ENCODE measurements at regions of chrX and their contacts with region 1.

Region 1: GRCh38 chrX:51420610-51421009 is 75.8 kb downstream of the NUDT11 start:
- DNase-seq: peak; percentile 40
- H3K4me3 ChIP-seq: no peak overlapping the region
- H3K27ac ChIP-seq: no peak overlapping the region
- H3K4me1 ChIP-seq: peaks cover 0 to 3% of the 10 kb centered on the region in 2 experiments; a peak in 1 of 4 replicates
- H3K27me3 ChIP-seq: no peaks in the 10 kb centered on the region; the same call in 1 of the 2 replicates
- CTCF ChIP-seq: peak; percentile 87
- EP300 ChIP-seq: no peak
- RAD21 ChIP-seq: peak; percentile 64

Region 2: DNA sequence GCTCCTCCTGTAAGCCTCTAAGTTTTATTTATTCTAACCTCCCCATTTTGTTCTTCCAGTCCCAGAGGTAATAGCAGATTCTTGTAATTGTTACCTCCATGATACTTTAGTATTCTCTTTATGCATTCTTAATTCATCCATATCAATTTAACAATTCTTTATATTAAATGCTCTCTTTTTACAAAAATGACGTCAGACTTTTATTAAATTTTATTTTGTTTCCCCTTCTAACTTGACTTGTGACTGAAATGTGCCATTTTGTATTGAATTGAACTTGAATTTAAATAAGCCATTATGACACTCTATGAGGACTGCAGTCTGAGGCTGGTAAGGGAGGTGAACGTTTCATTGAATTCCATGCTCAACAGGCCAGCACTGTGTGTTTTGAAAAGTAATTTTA is 148.0 kb before region 1 on chrX:
- CTCF ChIA-PET with region 1: no interaction called
- POLR2A ChIA-PET with region 1: no interaction called
- DNase-seq: no peak
- H3K4me3 ChIP-seq: no peak overlapping the region
- H3K27ac ChIP-seq: no peak overlapping the region
- H3K4me1 ChIP-seq: no peaks in the 10 kb centered on the region
- H3K27me3 ChIP-seq: no peaks in the 10 kb centered on the region
- CTCF ChIP-seq: no peak
- EP300 ChIP-seq: no peak
- RAD21 ChIP-seq: no peak

Region 3: DNA sequence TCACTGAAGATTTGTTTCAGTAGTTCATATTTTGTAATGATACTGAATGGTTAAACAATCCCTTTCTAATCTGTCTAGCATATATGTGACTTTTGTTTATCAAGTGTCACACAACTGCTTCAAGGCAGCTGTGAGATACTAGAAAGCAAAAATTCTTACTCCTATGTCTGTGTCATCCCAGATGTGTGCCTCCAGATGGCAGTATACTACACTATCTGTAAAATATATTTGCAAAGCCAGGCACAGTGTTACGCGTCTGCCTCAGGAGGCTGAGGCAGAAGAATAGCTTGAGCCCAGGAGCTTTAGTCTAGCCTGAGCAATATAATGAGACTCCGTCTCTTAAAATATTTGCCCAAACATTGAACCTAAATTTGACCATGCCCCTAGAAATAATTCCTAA is 84.0 kb before region 1 on chrX:
- CTCF ChIA-PET with region 1: interaction called, 106 read pairs
- POLR2A ChIA-PET with region 1: no interaction called
- DNase-seq: peak; percentile 63
- H3K4me3 ChIP-seq: no peak overlapping the region
- H3K27ac ChIP-seq: no peak overlapping the region
- H3K4me1 ChIP-seq: no peaks in the 10 kb centered on the region; a peak in 1 of 4 replicates
- H3K27me3 ChIP-seq: peaks cover 14% of the 10 kb centered on the region
- CTCF ChIP-seq: peak; percentile 67
- EP300 ChIP-seq: no peak
- RAD21 ChIP-seq: peak; percentile 74

Region 4: GRCh38 chrX:51395810-51396728 is 24.5 kb before region 1 on chrX:
- CTCF ChIA-PET with region 1: interaction called, 22 read pairs
- POLR2A ChIA-PET with region 1: no interaction called
- DNase-seq: peak; percentile 73
- H3K4me3 ChIP-seq: peak overlapping the region; percentile 37 to 46; a peak in 3 of 4 replicates
- H3K27ac ChIP-seq: peak overlapping the region in 1 of 2 experiments; percentile 67; a peak in 1 of 4 replicates
- H3K4me1 ChIP-seq: no peaks in the 10 kb centered on the region; a peak in 1 of 4 replicates
- H3K27me3 ChIP-seq: no peaks in the 10 kb centered on the region
- CTCF ChIP-seq: peak; percentile 25; the same call in 1 of the 2 replicates
- EP300 ChIP-seq: no peak
- RAD21 ChIP-seq: no peak

Region 5: DNA sequence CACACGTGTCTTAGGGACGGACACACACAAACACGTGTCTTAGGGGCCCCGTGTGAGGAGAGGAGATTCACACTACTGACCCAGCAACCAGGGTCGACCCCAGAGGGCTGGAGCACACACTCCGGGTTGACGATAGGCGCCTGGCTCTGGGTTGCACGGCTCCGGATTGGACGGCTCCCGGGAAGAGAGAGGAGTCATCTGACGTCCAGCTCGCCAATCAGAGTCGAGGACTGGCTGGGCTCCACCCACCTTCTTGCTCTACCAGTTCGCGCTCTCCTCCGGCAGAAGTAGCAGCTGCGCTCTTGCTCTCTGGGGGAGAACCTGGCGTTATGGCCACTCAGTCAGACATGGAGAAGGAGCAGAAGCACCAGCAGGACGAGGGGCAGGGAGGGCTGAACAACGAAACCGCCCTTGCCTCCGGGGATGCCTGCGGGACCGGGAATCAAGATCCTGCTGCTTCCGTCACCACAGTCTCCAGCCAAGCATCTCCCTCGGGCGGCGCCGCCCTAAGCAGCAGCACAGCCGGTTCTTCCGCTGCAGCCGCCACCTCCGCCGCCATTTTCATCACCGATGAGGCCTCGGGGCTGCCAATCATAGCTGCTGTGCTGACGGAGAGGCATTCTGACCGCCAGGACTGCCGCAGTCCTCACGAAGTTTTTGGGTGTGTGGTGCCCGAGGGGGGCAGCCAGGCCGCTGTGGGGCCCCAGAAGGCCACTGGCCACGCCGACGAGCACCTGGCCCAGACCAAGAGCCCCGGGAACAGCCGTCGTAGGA is 13.7 kb before region 1 on chrX:
- CTCF ChIA-PET with region 1: interaction called, 27 read pairs
- POLR2A ChIA-PET with region 1: no interaction called
- DNase-seq: no peak
- H3K4me3 ChIP-seq: no peak overlapping the region
- H3K27ac ChIP-seq: no peak overlapping the region
- H3K4me1 ChIP-seq: no peaks in the 10 kb centered on the region
- H3K27me3 ChIP-seq: peaks cover 10% of the 10 kb centered on the region; the same call in 1 of the 2 replicates
- CTCF ChIP-seq: no peak
- EP300 ChIP-seq: no peak
- RAD21 ChIP-seq: no peak

Region 6: DNA sequence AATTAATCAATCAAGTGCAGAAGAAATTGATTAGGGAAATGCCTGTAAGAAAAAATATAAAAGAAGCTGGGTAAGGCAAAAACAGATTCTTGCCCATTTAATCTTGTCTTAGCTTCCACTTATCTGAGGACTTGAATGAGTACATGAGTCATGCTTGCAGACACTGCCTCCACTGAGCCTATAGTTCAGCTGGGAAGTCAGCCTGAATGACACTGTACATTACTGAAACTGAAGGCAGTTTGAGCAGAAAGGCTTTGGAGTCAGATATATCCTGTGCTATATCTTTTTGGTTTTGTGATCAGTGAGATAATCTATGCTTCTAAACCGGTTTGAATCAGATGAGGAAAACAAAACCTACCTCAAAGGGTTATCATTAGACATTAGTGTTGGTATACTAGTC is 14.5 kb after region 1 on chrX:
- CTCF ChIA-PET with region 1: interaction called, 10 read pairs
- POLR2A ChIA-PET with region 1: no interaction called
- DNase-seq: no peak
- H3K4me3 ChIP-seq: no peak overlapping the region
- H3K27ac ChIP-seq: no peak overlapping the region
- H3K4me1 ChIP-seq: no peaks in the 10 kb centered on the region
- H3K27me3 ChIP-seq: no peaks in the 10 kb centered on the region
- CTCF ChIP-seq: no peak
- EP300 ChIP-seq: no peak
- RAD21 ChIP-seq: no peak

Region 7: GRCh38 chrX:51440365-51440764 is 19.8 kb after region 1 on chrX:
- CTCF ChIA-PET with region 1: interaction called, 15 read pairs
- POLR2A ChIA-PET with region 1: no interaction called
- DNase-seq: no peak
- H3K4me3 ChIP-seq: no peak overlapping the region
- H3K27ac ChIP-seq: no peak overlapping the region
- H3K4me1 ChIP-seq: no peaks in the 10 kb centered on the region
- H3K27me3 ChIP-seq: no peaks in the 10 kb centered on the region
- CTCF ChIP-seq: no peak
- EP300 ChIP-seq: no peak
- RAD21 ChIP-seq: no peak

Region 8: DNA sequence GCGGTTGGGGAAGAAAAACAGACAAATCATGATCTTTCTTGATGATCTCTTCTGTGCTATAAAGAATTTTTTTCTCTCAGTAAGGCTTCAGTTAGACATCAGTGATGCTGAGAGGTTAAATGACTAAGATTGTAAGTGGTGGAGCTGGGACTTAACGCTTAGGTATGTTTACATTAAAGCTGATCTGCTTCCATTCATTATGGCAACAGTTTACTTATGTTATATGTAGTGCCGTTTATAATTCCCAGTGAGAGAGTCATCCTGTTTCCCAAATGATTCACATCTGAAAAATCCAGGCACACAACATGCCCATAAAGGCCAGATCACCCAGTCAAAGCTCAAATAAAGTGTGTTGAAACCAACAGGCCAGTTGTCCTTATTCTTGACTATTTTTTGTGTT is 148.0 kb after region 1 on chrX:
- CTCF ChIA-PET with region 1: no interaction called
- POLR2A ChIA-PET with region 1: no interaction called
- DNase-seq: no peak
- H3K4me3 ChIP-seq: no peak overlapping the region
- H3K27ac ChIP-seq: peak overlapping the region in 1 of 2 experiments; percentile 57; a peak in 2 of 4 replicates
- H3K4me1 ChIP-seq: no peaks in the 10 kb centered on the region
- H3K27me3 ChIP-seq: no peaks in the 10 kb centered on the region
- CTCF ChIP-seq: no peak
- EP300 ChIP-seq: no peak
- RAD21 ChIP-seq: no peak

Measured in SK-N-SH (cell line).